Heart left ventricle (tissue), 16 donors: ENCODE measurements at regions of chr1 and their contacts with region 1.

Region 1: DNA sequence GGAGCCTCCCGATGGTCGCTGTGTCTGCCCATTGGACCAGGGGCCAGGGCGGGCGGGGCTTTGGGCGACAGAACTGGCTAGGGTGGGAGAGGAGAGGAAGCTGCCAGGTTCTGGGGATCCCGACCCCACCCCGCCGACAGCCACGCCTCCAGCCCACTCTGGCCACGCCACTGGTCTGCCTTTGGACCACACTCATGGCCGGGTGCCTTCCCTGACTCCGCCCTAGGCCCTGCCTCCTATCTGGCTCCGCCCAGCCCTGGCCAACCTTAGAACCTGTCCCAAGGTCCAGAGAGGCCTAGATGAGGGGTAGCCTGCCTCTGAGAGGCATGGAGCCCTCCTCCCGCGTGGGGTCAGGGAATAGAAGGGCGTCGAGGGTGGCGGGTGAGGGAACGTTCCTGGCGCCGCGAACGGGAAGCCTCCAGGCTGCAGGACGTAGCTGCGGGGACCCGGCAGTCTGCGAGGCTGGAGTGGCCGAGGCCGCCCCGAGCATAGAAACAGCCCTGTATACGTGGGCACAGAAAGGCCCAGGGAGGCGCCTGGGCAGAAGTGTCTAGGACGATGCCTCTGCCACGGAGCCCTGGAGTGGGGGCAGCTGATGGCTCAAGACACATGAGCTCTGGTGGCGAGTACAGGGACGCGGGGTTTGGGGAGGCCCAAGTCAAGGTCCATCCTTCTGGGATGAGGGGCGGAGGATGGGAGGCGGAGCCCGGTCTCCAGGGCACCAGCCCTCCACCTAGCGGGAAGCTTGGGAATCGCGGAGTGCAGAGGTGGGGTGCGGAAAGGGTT is 11.5 kb upstream of the COL16A1 start:
- DNase-seq: peak; percentile 95 to 98 (median 96)
- ATAC-seq: peak; percentile 97
- H3K4me3 ChIP-seq: peak overlapping the region in 11 of 12 donors; percentile 24 to 62 (median 55)
- H3K27ac ChIP-seq: peak overlapping the region; percentile 89 to 99 (median 96)
- H3K4me1 ChIP-seq: peaks cover 0 to 48% (median 35%) of the 10 kb centered on the region in 12 donors
- H3K27me3 ChIP-seq: peaks cover 0 to 19% (median 0%) of the 10 kb centered on the region in 9 donors
- CTCF ChIP-seq: peak; percentile 71 to 95 (median 90)
- POLR2A ChIP-seq: peak; percentile 52 to 84

Region 2: DNA sequence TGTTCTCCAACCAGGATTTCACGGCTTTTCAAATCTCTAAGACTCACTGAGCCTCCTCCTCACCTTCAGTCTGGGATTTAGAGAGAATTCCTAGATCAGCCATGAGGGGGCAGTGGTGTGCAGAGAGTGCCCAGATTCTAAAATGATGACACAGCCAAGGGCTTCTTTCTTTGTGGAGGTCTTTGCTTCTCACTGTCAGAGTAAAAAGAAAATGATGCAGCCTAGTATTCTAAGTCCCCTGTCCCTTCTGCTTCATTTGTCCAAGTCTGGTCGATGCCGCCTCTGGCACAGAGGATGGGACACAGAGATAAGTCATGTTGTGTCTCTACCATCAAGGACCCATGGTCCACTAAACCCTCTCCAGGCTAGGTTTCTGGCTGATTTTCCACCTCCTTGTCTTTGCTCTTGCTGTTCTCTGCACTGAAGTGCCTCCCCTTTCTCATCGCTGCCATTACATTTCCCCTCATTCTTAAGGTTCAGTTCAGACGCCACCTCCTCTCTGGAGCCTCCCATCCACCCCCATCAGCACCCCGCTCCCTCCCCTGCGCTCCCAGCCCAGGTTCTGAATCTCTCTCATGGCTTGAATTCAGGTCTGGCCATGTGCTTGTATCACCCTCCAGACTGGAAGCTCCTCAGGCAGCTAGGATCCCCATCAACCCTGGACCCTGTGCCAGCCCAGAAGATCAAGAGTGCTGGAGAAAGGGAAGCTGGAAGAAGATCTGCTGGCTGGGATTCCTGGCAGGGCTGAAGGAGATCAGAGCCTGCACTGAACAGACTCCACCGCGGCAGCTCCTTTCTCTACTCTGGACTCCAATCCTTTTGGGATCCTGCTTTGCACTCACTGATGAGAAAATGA is 150.9 kb before region 1 on chr1:
- intact Hi-C with region 1: loop called in 1 of 10 experiments (anchors 5 kb)
- DNase-seq: peak in 1 of 5 donors; percentile 49
- ATAC-seq: peak in 3 of 4 donors; percentile 64 to 69 (median 65)
- H3K4me3 ChIP-seq: no peak overlapping the region
- H3K27ac ChIP-seq: peak overlapping the region in 3 of 12 donors; percentile 8 to 48 (median 11)
- H3K4me1 ChIP-seq: peaks cover 0 to 21% (median 9%) of the 10 kb centered on the region in 12 donors
- H3K27me3 ChIP-seq: no peaks in the 10 kb centered on the region
- CTCF ChIP-seq: peak; percentile 76 to 94 (median 87)
- POLR2A ChIP-seq: no peak

Region 3: GRCh38 chr1:31617917-31618660 is 97.2 kb before region 1 on chr1:
- intact Hi-C with region 1: no loop called
- DNase-seq: peak in 4 of 5 donors; percentile 41 to 69 (median 52)
- ATAC-seq: peak in 3 of 4 donors; percentile 37 to 63 (median 53)
- H3K4me3 ChIP-seq: peak overlapping the region; percentile 39 to 79 (median 64)
- H3K27ac ChIP-seq: peak overlapping the region in 4 of 12 donors; percentile 12 to 60 (median 56)
- H3K4me1 ChIP-seq: peaks cover 3 to 48% (median 17%) of the 10 kb centered on the region in 12 donors
- H3K27me3 ChIP-seq: peaks cover 0 to 29% (median 4%) of the 10 kb centered on the region in 9 donors
- CTCF ChIP-seq: peak; percentile 76 to 93 (median 86)
- POLR2A ChIP-seq: no peak

Region 4: GRCh38 chr1:31644560-31645273 is 70.6 kb before region 1 on chr1 and contains the start of gene PEF1:
- intact Hi-C with region 1: loop called in 1 of 10 experiments (anchors 2 kb)
- DNase-seq: peak; percentile 99 to 100 (median 99)
- ATAC-seq: peak; percentile 94 to 96 (median 96)
- H3K4me3 ChIP-seq: peak within 1 kb of the TSS; percentile 78 to 99 (median 86)
- H3K27ac ChIP-seq: peak within 1 kb of the TSS; percentile 94 to 100 (median 98)
- H3K4me1 ChIP-seq: peaks cover 0 to 86% (median 61%) of the 10 kb centered on the region in 12 donors
- H3K27me3 ChIP-seq: no peaks in the 10 kb centered on the region
- CTCF ChIP-seq: no peak
- POLR2A ChIP-seq: peak; percentile 13 to 62
- total RNA-seq, gene PEF1: 32.2 to 55.4 (median 42.4) TPM

Region 5: GRCh38 chr1:31663622-31664452 is 51.4 kb before region 1 on chr1:
- intact Hi-C with region 1: loop called in 3 of 10 experiments (anchors 2 to 5 kb)
- DNase-seq: peak; percentile 50 to 76 (median 58)
- ATAC-seq: peak; percentile 23 to 55 (median 42)
- H3K4me3 ChIP-seq: no peak overlapping the region
- H3K27ac ChIP-seq: no peak overlapping the region
- H3K4me1 ChIP-seq: peaks cover 0 to 25% (median 10%) of the 10 kb centered on the region in 12 donors
- H3K27me3 ChIP-seq: no peaks in the 10 kb centered on the region
- CTCF ChIP-seq: peak; percentile 85 to 96 (median 88)
- POLR2A ChIP-seq: no peak

Region 6: DNA sequence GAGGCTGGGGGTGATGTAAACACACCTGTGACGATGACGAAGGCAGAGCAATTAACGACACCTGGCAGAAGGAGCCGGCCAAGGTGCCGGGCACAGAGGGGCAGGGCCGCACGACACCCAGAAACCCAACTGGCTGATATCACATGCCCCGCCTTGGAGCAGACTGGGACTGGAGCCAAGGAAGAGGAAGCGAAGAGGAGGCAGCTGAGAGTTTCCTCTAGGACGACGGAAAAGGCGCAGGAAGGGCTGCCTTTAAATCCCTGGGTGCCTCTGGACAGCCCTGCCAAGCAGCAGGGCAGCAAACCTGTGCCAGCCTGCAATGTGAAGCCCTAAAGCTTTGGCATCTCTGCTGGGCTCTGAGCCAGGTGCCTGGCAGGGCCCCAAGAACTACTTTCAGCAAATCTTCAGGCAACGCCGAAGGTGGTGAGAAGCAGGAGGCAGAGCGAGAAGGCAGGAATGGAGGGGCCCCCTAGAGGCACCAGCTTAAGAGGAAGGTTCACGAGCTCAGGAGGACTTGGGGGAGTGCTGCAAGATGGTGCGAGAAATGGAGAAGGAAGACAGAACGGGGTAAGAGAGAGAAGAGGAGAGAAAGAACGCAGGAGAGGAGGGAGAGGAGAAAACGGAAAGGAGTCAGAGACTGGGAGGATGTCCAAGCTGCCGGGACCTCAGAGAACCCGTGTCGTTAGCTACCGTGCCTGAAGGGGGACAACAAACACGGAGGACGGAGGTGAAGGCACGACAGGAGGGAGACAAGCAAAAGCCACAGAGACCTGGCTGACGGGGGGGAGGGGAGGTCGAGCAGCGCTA is 45.3 kb before region 1 on chr1:
- intact Hi-C with region 1: loop called in 8 of 10 experiments (anchors 1 to 5 kb)
- DNase-seq: peak; percentile 74 to 86 (median 83)
- ATAC-seq: peak; percentile 58 to 78 (median 66)
- H3K4me3 ChIP-seq: peak overlapping the region in 10 of 12 donors; percentile 12 to 56 (median 44)
- H3K27ac ChIP-seq: peak overlapping the region; percentile 17 to 90 (median 72)
- H3K4me1 ChIP-seq: peaks cover 0 to 85% (median 55%) of the 10 kb centered on the region in 12 donors
- H3K27me3 ChIP-seq: peaks cover 0 to 4% (median 0%) of the 10 kb centered on the region in 9 donors
- CTCF ChIP-seq: peak in 7 of 12 donors; percentile 1 to 25 (median 17)
- POLR2A ChIP-seq: no peak

Region 7: GRCh38 chr1:31745096-31745945 is 30.0 kb after region 1 on chr1:
- intact Hi-C with region 1: loop called in 1 of 10 experiments (anchors 2 kb)
- DNase-seq: peak; percentile 50 to 80 (median 69)
- ATAC-seq: peak in 3 of 4 donors; percentile 66 to 81 (median 75)
- H3K4me3 ChIP-seq: no peak overlapping the region
- H3K27ac ChIP-seq: no peak overlapping the region
- H3K4me1 ChIP-seq: peaks cover 0 to 39% (median 8%) of the 10 kb centered on the region in 12 donors
- H3K27me3 ChIP-seq: no peaks in the 10 kb centered on the region
- CTCF ChIP-seq: peak; percentile 59 to 84 (median 69)
- POLR2A ChIP-seq: no peak

Region 8: DNA sequence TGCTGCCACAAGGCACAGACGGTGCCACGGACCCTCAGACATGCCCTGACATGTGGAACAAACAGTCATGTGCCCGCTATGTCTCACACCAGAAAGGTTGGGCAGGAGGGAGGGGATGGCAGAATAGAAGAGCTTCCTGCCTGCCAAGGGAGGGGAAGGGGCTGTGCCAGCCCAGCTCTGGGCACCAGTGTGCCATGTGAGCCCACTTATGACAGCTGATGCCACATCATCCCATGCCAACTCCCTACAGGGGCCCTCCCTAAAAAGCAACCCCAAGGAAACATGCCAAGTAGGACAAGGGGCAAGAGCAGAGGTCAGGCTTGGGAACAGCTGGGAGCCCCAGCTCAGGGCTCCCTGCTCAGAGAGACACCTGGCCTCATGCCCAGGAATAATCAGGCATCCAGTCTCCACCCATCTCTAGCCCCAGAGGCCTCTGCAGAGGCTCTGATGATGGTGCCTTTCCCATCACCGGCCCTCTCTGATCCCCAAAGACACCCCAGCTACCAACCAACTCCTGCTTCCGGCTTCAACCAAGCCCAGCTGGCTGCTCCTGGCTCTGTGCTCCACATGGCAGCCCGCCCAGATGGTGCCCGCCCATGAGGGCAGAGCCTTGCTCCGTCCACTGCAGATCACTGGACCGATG is 38.5 kb after region 1 on chr1:
- intact Hi-C with region 1: loop called in 1 of 10 experiments (anchors 2 kb)
- DNase-seq: peak in 4 of 5 donors; percentile 59 to 84 (median 68)
- ATAC-seq: peak; percentile 45 to 75 (median 69)
- H3K4me3 ChIP-seq: no peak overlapping the region
- H3K27ac ChIP-seq: peak overlapping the region in 10 of 12 donors; percentile 2 to 79 (median 33)
- H3K4me1 ChIP-seq: peaks cover 0 to 68% (median 42%) of the 10 kb centered on the region in 12 donors
- H3K27me3 ChIP-seq: no peaks in the 10 kb centered on the region
- CTCF ChIP-seq: no peak
- POLR2A ChIP-seq: no peak